AG04450 (cell line): ENCODE measurements at regions of chr10 and their contacts with region 1.

Region 1: GRCh38 chr10:35027567-35027966 is 62.6 kb downstream of the CUL2 start:
- DNase-seq: no peak
- H3K4me3 ChIP-seq: no peak overlapping the region
- H3K27ac ChIP-seq: no peak overlapping the region
- H3K27me3 ChIP-seq: no peaks in the 10 kb centered on the region
- CTCF ChIP-seq: peak; percentile 57

Region 2: GRCh38 chr10:34655286-34656170 is 372.0 kb before region 1 on chr10:
- CTCF ChIA-PET with region 1: interaction called, 33 read pairs
- POLR2A ChIA-PET with region 1: no interaction called
- DNase-seq: peak; percentile 39
- H3K4me3 ChIP-seq: no peak overlapping the region
- H3K27ac ChIP-seq: no peak overlapping the region
- H3K27me3 ChIP-seq: no peaks in the 10 kb centered on the region
- CTCF ChIP-seq: peak; percentile 80

Region 3: DNA sequence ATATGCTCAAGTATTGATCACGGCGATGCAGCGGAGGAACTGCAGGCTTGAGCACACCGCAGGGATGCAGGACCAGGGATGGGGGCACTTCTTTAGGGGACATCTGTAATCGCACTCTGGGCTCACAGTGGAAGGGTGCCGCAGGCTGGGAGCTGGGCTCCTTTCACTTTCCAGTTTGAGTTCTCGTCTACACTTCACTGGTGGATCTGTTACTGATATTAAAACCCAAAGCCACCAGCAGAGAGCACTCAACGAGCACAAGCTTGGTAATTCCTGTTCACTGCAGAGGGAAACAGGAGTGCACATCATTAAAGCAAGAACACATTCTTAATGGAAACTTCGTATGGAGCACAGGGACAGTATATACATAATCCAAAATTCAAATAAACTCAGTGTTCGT is 303.8 kb before region 1 on chr10:
- CTCF ChIA-PET with region 1: interaction called, 23 read pairs
- POLR2A ChIA-PET with region 1: no interaction called
- DNase-seq: no peak
- H3K4me3 ChIP-seq: no peak overlapping the region
- H3K27ac ChIP-seq: no peak overlapping the region
- H3K27me3 ChIP-seq: no peaks in the 10 kb centered on the region
- CTCF ChIP-seq: peak; percentile 61

Region 4: GRCh38 chr10:35005868-35006267 is 21.7 kb before region 1 on chr10:
- CTCF ChIA-PET with region 1: interaction called, 12 read pairs
- POLR2A ChIA-PET with region 1: no interaction called
- DNase-seq: peak; percentile 81
- H3K4me3 ChIP-seq: no peak overlapping the region
- H3K27ac ChIP-seq: peak overlapping the region; percentile 72
- H3K27me3 ChIP-seq: no peaks in the 10 kb centered on the region
- CTCF ChIP-seq: no peak

Region 5: DNA sequence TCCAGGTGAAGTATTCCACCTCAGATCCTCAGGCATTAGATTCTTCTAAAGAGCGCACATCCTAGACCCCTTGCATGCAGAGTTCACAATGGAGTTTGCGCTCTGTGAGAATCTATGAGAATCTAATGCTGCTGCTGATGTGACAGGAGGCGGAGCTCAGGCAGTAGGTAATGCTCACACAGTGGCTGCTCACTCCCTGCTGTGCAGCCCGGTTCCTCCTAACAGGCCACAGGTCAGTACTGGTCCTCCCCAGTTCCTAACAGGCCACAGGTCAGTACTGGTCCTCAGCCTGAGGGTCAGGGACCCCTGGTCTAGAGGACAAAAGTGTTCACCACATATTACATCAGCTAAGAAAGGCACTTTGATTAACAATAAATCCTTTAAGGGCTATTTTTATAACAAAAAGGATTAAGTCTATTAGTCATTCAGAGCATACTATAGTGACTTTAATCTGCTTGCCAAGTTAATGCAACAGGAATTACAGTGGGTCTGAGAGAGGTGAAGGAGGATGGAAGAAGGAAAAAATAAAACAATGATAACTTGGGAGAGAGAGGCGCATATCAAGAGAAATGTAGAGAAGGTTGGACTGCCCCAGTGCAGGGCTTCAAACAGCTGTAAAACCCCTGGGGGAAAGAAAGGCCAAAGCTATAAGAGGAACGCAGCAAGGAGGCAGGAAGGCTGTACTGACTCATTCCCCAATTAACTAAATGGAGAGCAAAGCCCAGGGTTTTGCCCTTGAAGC is 13.4 kb after region 1 on chr10:
- CTCF ChIA-PET with region 1: interaction called, 24 read pairs
- POLR2A ChIA-PET with region 1: no interaction called
- DNase-seq: no peak
- H3K4me3 ChIP-seq: no peak overlapping the region
- H3K27ac ChIP-seq: peak overlapping the region; percentile 76
- H3K27me3 ChIP-seq: no peaks in the 10 kb centered on the region
- CTCF ChIP-seq: no peak